Dendritic cell treated with granulocyte-macrophage colony-stimulating factor and Interleukin-4, amounts not matched to agents 40 ng/mL and 50 ng/mL, for 4 days (primary cell): ENCODE measurements at regions of chr12 and their contacts with region 1.

Region 1: GRCh38 chr12:6723607-6724396 is at the start of gene COPS7A:
- H3K4me3 Mint-ChIP-seq: peak within 1 kb of the TSS; percentile 93
- H3K27ac Mint-ChIP-seq: peak within 1 kb of the TSS; percentile 88
- H3K4me1 Mint-ChIP-seq: peaks cover 26% of the 10 kb centered on the region
- H3K27me3 Mint-ChIP-seq: peaks cover 2% of the 10 kb centered on the region

Region 2: DNA sequence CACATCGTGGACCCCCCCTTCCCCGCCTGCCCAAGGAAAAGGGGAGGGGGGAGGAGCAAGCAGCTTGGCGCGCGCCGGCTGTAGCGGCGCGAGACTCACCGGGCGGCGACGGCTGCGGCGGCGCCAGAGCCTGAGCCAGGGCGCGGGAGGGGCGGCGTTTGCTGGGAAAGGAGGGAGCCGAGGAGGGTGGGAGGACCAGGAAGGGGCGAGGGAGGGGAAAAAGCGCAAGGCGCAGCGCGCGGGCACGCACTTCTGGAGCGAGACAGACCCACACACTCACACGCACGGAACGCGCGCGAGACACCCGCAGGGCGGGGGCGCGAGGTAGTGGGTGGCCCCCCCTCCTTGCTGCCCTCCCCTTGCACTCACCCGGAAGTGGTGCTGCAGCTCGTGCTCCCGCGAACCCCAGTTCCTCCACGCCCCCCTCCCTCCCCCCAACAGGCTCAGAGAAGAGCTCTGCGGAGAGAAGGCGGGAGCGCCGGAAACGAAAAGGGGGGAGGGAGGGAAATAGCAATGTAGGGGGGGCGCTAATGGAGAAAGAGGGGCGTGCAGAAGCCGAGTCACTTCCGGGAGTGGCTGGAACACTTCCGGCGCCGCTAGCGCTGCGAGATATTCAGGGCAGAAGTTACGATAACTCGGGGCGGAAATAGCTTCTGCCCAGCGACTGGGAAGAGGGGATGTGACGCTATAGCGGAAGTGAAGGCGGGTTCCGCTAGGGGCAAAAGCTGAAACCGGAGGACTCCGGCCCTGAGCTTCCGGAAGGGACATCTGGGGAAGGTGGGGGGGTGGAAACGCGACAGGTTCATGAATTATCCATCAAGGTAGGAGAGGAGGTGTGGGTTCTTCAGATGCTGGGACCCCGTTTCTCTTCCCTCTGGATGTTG is 34.6 kb before region 1 on chr12 and contains the start of gene ZNF384:
- intact Hi-C with region 1: loop called (anchors 1 kb)
- H3K4me3 Mint-ChIP-seq: peak within 1 kb of the TSS; percentile 97
- H3K27ac Mint-ChIP-seq: peak within 1 kb of the TSS; percentile 97
- H3K4me1 Mint-ChIP-seq: peaks cover 50% of the 10 kb centered on the region
- H3K27me3 Mint-ChIP-seq: peaks cover 10% of the 10 kb centered on the region

Region 3: DNA sequence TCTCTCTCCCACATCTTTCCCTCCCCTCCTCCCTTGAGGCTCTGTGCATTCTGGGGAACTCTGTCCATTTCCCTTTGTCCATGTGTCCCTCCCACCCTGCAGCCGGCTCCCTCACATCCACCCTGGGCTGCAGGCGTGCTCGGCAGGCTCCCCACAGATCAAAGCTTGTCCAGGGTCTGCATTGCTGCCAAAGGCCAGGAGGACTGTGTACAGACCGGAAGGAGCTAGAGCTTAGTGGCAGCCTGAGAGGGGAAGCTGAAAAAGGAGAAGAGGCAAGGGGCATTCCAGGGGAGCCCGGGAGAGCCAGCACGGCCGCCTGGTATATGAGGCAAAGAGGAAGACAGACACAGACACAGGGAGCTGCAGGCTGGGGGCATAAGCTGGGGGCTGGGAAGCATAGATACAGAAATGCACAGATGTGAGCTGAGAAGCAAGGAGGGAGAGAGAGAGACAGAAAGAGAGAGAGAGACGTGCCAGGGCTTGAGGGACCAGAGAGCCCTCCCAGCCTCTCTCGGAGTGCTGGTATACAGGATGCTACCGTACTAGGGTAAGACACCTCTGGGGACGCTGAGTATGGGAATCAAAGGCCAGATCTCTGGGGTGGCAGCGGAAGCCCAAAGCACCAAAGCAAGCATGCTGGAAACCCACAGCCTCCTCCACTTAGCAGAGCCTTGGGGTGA is 68.9 kb after region 1 on chr12:
- intact Hi-C with region 1: no loop called
- H3K4me3 Mint-ChIP-seq: peak overlapping the region; percentile 88
- H3K27ac Mint-ChIP-seq: peak overlapping the region; percentile 93
- H3K4me1 Mint-ChIP-seq: peaks cover 67% of the 10 kb centered on the region
- H3K27me3 Mint-ChIP-seq: no peaks in the 10 kb centered on the region